Prostate gland (tissue), 2 donors: ENCODE measurements at regions of chr6 and their contacts with region 1.

Region 1: GRCh38 chr6:17086469-17086868 is 15.4 kb upstream of the STMND1 start:
- DNase-seq: peak; percentile 76
- H3K4me3 ChIP-seq: no peak overlapping the region
- H3K27ac ChIP-seq: no peak overlapping the region
- H3K4me1 ChIP-seq: no peaks in the 10 kb centered on the region
- H3K27me3 ChIP-seq: no peaks in the 10 kb centered on the region
- CTCF ChIP-seq: peak; percentile 30 to 76 (median 74)
- POLR2A ChIP-seq: no peak

Region 2: GRCh38 chr6:16332175-16332542 is 754.3 kb before region 1 on chr6:
- intact Hi-C with region 1: loop called (anchors 5 kb)
- DNase-seq: peak; percentile 83
- H3K4me3 ChIP-seq: no peak overlapping the region
- H3K27ac ChIP-seq: peak overlapping the region in 1 of 2 donors; percentile 41
- H3K4me1 ChIP-seq: no peaks in the 10 kb centered on the region
- H3K27me3 ChIP-seq: no peaks in the 10 kb centered on the region
- CTCF ChIP-seq: peak; percentile 84 to 96 (median 92)
- POLR2A ChIP-seq: no peak

Region 3: DNA sequence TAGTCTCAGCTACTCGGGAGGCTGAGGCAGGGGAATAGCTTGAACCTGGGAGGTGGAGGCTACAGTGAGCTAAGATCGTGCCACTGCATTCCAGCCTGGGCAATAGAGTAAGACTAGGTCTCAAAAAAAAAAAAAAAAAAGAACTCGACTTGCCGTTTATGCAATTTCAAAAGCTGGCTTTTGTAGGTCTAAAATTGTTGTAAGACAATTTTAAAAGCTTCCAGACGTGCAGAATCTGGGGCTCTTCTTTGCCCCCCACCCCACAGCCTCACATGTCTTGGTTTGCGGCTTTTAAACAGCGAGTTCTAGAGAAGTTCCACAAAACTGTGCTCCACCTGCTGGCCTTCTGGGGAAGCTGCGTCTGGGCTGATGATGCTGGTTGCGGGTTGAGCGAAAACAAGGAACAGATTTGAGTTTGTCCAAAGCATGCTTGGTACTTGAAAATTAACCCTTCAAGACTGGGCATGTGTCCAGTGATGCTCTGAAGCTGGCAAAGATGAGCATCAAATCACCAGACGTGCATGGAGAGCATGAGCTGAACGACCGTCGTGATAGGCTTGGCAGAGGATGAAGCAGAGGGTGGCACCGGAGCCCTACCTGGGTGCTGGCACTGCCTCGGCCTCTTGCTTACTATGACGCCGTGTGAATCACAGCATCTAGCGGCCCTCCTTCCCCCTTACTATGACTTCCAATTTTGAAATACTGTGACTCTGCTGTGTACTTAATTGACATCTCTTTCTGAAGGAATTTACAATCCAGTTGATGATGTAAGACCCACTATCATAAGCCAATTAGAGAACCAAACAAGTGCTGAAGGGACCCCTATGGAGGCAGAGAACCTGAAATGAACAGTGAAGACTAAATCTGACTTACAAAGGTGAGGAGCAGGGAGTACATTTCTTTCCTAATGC is 676.7 kb before region 1 on chr6:
- intact Hi-C with region 1: loop called (anchors 10 kb)
- DNase-seq: peak; percentile 48
- H3K4me3 ChIP-seq: no peak overlapping the region
- H3K27ac ChIP-seq: no peak overlapping the region
- H3K4me1 ChIP-seq: peaks cover 1% of the 10 kb centered on the region
- H3K27me3 ChIP-seq: no peaks in the 10 kb centered on the region
- CTCF ChIP-seq: peak; percentile 10 to 71 (median 54)
- POLR2A ChIP-seq: no peak

Region 4: DNA sequence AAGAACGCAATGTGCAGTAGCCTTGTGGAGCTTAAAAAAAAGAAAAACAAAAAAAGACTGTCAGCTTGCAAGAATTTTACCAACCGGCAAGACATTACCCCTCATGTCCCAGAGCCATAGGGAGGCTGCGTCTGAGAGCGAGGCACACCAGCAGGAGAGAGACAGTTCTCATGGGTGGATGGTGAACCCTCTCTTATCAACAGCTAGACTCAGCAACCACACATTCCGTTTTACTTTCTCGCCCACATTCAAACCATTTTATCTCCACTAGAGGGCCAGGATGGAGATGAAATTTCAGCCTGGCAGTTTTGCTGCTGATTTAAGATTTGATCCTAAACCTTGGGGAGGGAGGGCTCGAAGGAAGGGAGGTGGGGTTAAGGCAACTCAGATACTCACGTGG is 572.2 kb before region 1 on chr6:
- intact Hi-C with region 1: loop called (anchors 10 kb)
- DNase-seq: no peak
- H3K4me3 ChIP-seq: no peak overlapping the region
- H3K27ac ChIP-seq: no peak overlapping the region
- H3K4me1 ChIP-seq: peaks cover 8% of the 10 kb centered on the region
- H3K27me3 ChIP-seq: no peaks in the 10 kb centered on the region
- CTCF ChIP-seq: peak in 3 of 4 experiments; percentile 44 to 52 (median 51)
- POLR2A ChIP-seq: no peak

Region 5: GRCh38 chr6:16761471-16762267 is 324.8 kb before region 1 on chr6:
- intact Hi-C with region 1: loop called (anchors 2 kb)
- DNase-seq: peak; percentile 89
- H3K4me3 ChIP-seq: peak overlapping the region; percentile 90 to 99
- H3K27ac ChIP-seq: peak overlapping the region; percentile 97 to 98
- H3K4me1 ChIP-seq: peaks cover 13% of the 10 kb centered on the region
- H3K27me3 ChIP-seq: no peaks in the 10 kb centered on the region
- CTCF ChIP-seq: peak in 2 of 4 experiments; percentile 21 to 33
- POLR2A ChIP-seq: peak; percentile 43

Region 6: GRCh38 chr6:16964553-16965501 is 121.6 kb before region 1 on chr6:
- intact Hi-C with region 1: loop called (anchors 5 kb)
- DNase-seq: peak; percentile 75
- H3K4me3 ChIP-seq: no peak overlapping the region
- H3K27ac ChIP-seq: no peak overlapping the region
- H3K4me1 ChIP-seq: no peaks in the 10 kb centered on the region
- H3K27me3 ChIP-seq: no peaks in the 10 kb centered on the region
- CTCF ChIP-seq: peak; percentile 79 to 91 (median 80)
- POLR2A ChIP-seq: no peak

Region 7: GRCh38 chr6:17012421-17013225 is 73.8 kb before region 1 on chr6:
- intact Hi-C with region 1: loop called (anchors 5 kb)
- DNase-seq: peak; percentile 33
- H3K4me3 ChIP-seq: no peak overlapping the region
- H3K27ac ChIP-seq: peak overlapping the region; percentile 40 to 50
- H3K4me1 ChIP-seq: no peaks in the 10 kb centered on the region
- H3K27me3 ChIP-seq: no peaks in the 10 kb centered on the region
- CTCF ChIP-seq: no peak
- POLR2A ChIP-seq: no peak

Region 8: DNA sequence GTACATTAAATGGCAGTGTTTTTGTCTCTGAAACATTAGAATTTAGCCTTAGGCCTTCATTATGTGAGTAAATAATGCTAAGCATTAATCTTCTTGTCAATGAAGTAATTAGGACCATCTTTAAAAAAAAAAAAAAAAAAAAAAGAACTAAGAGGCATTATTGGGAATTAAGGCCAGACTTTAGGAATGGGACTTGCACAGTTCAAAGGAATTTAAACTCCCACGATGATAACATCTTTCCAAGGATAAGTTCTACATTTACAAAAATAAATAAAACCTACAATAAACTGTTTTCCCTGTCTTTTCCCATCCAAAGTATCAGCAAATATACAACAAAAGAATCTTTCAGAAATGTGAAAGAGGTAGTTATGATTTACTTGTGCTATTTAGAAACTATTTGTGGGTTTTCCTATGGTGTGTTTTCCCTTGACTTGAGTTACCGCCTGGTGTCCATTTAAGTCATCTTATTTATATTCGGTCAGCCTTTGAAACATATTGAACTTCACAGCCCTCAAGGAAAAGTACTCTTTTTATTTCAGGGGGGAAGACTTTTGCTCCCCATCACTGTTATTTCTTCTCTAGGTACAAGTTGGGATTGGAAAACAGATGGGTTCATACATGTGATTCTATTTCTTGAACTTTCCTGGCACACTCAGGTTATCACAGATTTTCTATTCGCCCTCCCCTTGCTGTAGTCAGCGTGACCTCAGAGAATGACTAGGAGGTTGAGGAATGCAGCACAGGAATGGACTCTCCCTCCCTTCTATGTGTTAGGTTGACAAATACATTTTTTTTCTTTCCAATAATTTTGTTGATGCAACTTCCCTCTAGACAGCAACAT is 29.0 kb after region 1 on chr6:
- intact Hi-C with region 1: no loop called
- DNase-seq: no peak
- H3K4me3 ChIP-seq: no peak overlapping the region
- H3K27ac ChIP-seq: no peak overlapping the region
- H3K4me1 ChIP-seq: no peaks in the 10 kb centered on the region
- H3K27me3 ChIP-seq: no peaks in the 10 kb centered on the region
- CTCF ChIP-seq: no peak
- POLR2A ChIP-seq: no peak